ENCODE measurements at regions of chr17 and their contacts with region 1.

Region 1: GRCh38 chr17:39730095-39730921 is at the start of gene MIEN1:
- DNase-seq: peak; percentile 75
- H3K4me3 ChIP-seq: peak within 1 kb of the TSS; percentile 68 to 69 (median 68)
- H3K27ac ChIP-seq: peak within 1 kb of the TSS; percentile 61
- H3K4me1 ChIP-seq: peaks cover 7% of the 10 kb centered on the region
- H3K27me3 ChIP-seq: no peaks in the 10 kb centered on the region
- CTCF ChIP-seq: peak; percentile 36 to 87
- total RNA-seq, gene MIEN1: 10.2 to 36.8 TPM

Region 2: DNA sequence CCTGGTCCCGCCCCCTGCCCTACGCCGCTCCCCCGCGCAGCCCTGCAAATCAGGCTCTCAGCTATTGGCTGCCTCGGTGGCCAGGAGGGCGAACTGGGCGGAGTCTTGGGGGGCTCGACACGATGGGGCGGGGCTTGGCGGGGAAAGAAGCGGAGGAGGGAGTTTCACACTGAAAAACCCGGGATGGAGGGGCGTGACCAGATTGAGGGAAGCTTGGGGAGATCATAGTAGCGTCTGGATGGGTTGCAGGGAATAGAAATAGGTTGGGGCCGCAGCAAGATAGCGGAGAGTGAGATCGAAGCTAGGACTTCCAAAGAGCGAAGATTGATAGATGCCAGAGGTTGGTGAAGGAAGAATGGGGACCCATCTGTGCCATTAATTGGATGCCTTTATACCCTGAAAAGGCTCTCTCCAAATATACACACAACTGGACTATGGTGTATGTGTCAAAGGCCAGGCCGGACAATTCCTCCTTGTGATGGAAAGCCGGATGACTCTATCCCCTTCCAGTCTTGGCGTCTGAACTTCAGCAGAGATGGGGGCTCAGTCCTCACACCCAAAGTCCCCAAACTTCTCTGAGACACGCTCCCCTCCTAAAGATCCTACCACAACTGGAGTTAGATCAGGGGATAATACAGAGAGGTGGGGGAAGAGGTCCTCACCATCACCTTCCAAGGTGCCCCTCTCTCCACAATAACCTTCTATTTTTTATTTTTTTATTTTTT is 504.2 kb before region 1 on chr17:
- CTCF ChIA-PET with region 1: interaction called, 43 read pairs
- dilution Hi-C with region 1: no loop called
- in situ Hi-C with region 1: no loop called
- intact Hi-C with region 1: no loop called
- DNase-seq: no peak
- H3K4me3 ChIP-seq: peak overlapping the region in 1 of 3 experiments; percentile 17
- H3K27ac ChIP-seq: no peak overlapping the region
- H3K4me1 ChIP-seq: peaks cover 20% of the 10 kb centered on the region
- H3K27me3 ChIP-seq: peaks cover 25% of the 10 kb centered on the region
- CTCF ChIP-seq: no peak

Region 3: GRCh38 chr17:39687811-39688518 is 42.3 kb before region 1 on chr17 and contains the start of gene PGAP3:
- CTCF ChIA-PET with region 1: no interaction called
- dilution Hi-C with region 1: no loop called
- in situ Hi-C with region 1: no loop called
- intact Hi-C with region 1: loop called (anchors 2 kb)
- DNase-seq: peak; percentile 90
- H3K4me3 ChIP-seq: peak within 1 kb of the TSS; percentile 50 to 76 (median 66)
- H3K27ac ChIP-seq: peak within 1 kb of the TSS; percentile 41
- H3K4me1 ChIP-seq: peaks cover 10% of the 10 kb centered on the region
- H3K27me3 ChIP-seq: no peaks in the 10 kb centered on the region
- CTCF ChIP-seq: no peak
- total RNA-seq, gene PGAP3: 8.3 to 13.2 TPM

Region 4: GRCh38 chr17:39769974-39770587 is 39.8 kb after region 1 on chr17:
- CTCF ChIA-PET with region 1: no interaction called
- dilution Hi-C with region 1: no loop called
- in situ Hi-C with region 1: no loop called
- intact Hi-C with region 1: no loop called
- DNase-seq: peak; percentile 100
- H3K4me3 ChIP-seq: no peak overlapping the region
- H3K27ac ChIP-seq: no peak overlapping the region
- H3K4me1 ChIP-seq: peaks cover 17% of the 10 kb centered on the region
- H3K27me3 ChIP-seq: peaks cover 60% of the 10 kb centered on the region
- CTCF ChIP-seq: no peak

Measured in mammary epithelial cell (primary cell).